Activated T-helper 1 cell treated with anti-CD3 and anti-CD28 coated beads, Interleukin-12 subunit alpha, Interleukin-12 subunit beta, Interleukin-2, Interleukin-4 antibody, amounts not matched to agents 30 ng/mL and 10 ng/mL and 1 ng/mL, durations not matched to agents 14 hours and 24 hours and 36 hours (primary cell): ENCODE measurements at regions of chr9 and their contacts with region 1.

Region 1: DNA sequence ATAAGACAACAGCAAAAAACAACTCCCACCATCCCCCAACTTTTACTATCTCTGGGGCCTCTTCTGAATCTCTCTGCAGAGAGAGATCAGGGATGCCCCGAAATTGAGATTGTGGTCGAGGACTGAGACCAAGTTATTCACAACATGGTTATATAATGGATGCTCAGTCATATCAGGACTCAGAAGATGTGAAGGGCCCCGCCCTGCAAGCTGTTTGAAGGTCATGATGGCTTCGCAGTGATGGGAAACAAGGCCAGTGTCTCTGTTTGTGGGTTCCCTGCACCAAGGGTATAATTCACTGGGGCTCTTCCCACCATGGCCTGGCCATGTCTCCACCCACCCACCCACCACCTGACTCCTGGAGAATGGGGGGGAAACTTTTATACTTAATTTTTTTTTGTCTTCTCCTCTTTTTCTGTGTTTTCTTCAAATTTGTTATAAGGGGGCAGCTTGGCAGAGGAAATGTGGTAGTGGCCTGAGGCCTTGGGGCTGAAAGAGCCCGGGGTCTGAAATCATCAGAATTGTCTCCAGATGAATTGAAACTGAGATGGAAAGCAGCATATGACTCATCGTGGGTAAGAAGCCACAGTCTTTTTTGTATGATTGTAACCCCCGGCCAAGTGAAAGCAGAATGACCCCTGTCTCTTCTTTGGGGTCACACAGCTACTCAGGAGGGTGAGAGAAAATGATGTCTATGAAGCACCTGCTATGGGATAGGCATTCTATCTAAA is 15.0 kb upstream of the TEX48 start:
- DNase-seq: peak; percentile 80
- H3K4me3 Mint-ChIP-seq: peak overlapping the region; percentile 46
- H3K27ac Mint-ChIP-seq: peak overlapping the region; percentile 95
- H3K4me1 Mint-ChIP-seq: peaks cover 92% of the 10 kb centered on the region
- H3K27me3 Mint-ChIP-seq: no peaks in the 10 kb centered on the region

Region 2: DNA sequence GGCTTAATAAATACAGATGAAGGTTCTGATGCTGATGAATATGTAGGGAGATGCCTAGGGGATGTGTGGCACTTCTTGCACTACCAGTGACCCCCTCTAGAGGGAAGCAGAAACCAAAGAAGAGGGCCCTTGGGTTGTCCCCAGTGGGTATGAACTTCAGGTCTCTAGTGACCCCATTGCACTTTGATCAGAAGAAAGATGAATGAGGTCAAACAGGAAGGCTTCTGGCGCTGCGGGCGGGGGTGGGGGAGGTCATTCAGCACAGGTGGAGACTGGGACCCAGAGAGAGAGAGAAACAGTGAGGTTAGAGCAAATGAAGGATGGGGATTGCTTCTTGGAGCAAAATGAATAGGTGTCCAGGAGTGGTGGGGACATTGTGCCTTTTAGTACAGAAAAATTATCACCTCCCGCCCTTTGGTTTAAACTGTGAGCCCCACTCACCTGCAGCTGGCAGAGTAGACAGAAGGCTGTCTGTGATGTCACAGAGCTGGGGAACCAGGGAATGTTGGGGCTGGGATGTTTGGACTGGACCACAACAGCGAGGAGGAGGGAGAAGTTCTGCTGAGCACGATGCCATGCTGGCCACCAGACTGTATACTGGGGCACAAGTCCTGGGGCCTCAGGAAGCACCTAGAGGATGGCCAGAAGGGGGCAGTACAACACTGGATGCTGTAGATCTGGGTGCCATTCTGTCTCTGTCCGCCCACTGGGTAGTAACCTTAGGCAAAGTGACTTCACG is 15.2 kb before region 1 on chr9 and contains the start of gene TEX48:
- intact Hi-C with region 1: loop called (anchors 1 kb)
- DNase-seq: peak; percentile 76
- H3K4me3 Mint-ChIP-seq: peak within 1 kb of the TSS; percentile 49
- H3K27ac Mint-ChIP-seq: peak within 1 kb of the TSS; percentile 97
- H3K4me1 Mint-ChIP-seq: peaks cover 81% of the 10 kb centered on the region
- H3K27me3 Mint-ChIP-seq: no peaks in the 10 kb centered on the region
- total RNA-seq, gene TEX48: 1.0 and 1.2 TPM in 2 replicates

Region 3: DNA sequence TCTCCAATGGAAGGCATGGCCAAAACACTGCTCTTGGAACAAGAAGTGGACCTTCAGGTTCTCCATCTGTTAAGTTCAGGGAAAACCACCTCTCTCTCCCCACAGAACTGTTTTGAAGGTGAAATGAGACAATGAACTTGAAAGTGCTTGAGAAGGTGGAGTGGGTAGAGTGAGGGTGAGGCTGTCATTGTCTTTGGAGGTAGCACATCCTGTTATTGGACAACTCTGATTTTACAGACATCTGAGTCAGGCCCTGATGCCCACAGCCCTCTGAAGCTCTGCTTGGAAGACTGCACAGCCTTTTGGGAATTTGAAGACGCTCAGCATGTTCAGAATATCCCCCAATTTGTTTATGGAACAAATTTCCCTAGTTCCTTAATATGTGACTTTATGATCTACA is 12.7 kb after region 1 on chr9:
- intact Hi-C with region 1: loop called (anchors 1 kb)
- DNase-seq: no peak
- H3K4me3 Mint-ChIP-seq: peak overlapping the region; percentile 40
- H3K27ac Mint-ChIP-seq: peak overlapping the region; percentile 88
- H3K4me1 Mint-ChIP-seq: peaks cover 76% of the 10 kb centered on the region
- H3K27me3 Mint-ChIP-seq: no peaks in the 10 kb centered on the region